ENCODE measurements at regions of chr15 and their contacts with region 1.

Region 1: GRCh38 chr15:48810414-48811317 is at the start of gene CEP152:
- DNase-seq: peak; percentile 99
- ATAC-seq: peak; percentile 95
- H3K4me3 ChIP-seq: peak within 1 kb of the TSS; percentile 86 to 97 (median 94)
- H3K4me3 Mint-ChIP-seq: peak within 1 kb of the TSS; percentile 95
- H3K27ac ChIP-seq: peak within 1 kb of the TSS; percentile 74 to 76
- H3K27ac Mint-ChIP-seq: peak within 1 kb of the TSS; percentile 86
- H3K4me1 ChIP-seq: peaks cover 15 to 18% of the 10 kb centered on the region in 2 donors
- H3K4me1 Mint-ChIP-seq: peaks cover 30% of the 10 kb centered on the region
- H3K27me3 ChIP-seq: peaks cover 0 to 7% (median 0%) of the 10 kb centered on the region in 4 experiments
- H3K27me3 Mint-ChIP-seq: peaks cover 4% of the 10 kb centered on the region
- CTCF ChIP-seq: no peak
- total RNA-seq, gene CEP152: 18.0 and 18.1 TPM in 2 replicates

Region 2: GRCh38 chr15:48330855-48331795 is 479.5 kb before region 1 on chr15 and contains the start of gene DUT:
- CTCF ChIA-PET with region 1: no interaction called
- POLR2A ChIA-PET with region 1: interaction called, 3 read pairs
- intact Hi-C with region 1: loop called (anchors 1 kb)
- DNase-seq: peak; percentile 89
- ATAC-seq: peak; percentile 78
- H3K4me3 ChIP-seq: peak within 1 kb of the TSS; percentile 76 to 90 (median 77)
- H3K4me3 Mint-ChIP-seq: peak within 1 kb of the TSS; percentile 94
- H3K27ac ChIP-seq: peak within 1 kb of the TSS; percentile 83 to 90
- H3K27ac Mint-ChIP-seq: peak within 1 kb of the TSS; percentile 95
- H3K4me1 ChIP-seq: peaks cover 15 to 17% of the 10 kb centered on the region in 2 donors
- H3K4me1 Mint-ChIP-seq: peaks cover 25% of the 10 kb centered on the region
- H3K27me3 ChIP-seq: no peaks in the 10 kb centered on the region
- H3K27me3 Mint-ChIP-seq: no peaks in the 10 kb centered on the region
- CTCF ChIP-seq: no peak
- total RNA-seq, gene DUT: 84.7 and 89.8 TPM in 2 replicates

Region 3: DNA sequence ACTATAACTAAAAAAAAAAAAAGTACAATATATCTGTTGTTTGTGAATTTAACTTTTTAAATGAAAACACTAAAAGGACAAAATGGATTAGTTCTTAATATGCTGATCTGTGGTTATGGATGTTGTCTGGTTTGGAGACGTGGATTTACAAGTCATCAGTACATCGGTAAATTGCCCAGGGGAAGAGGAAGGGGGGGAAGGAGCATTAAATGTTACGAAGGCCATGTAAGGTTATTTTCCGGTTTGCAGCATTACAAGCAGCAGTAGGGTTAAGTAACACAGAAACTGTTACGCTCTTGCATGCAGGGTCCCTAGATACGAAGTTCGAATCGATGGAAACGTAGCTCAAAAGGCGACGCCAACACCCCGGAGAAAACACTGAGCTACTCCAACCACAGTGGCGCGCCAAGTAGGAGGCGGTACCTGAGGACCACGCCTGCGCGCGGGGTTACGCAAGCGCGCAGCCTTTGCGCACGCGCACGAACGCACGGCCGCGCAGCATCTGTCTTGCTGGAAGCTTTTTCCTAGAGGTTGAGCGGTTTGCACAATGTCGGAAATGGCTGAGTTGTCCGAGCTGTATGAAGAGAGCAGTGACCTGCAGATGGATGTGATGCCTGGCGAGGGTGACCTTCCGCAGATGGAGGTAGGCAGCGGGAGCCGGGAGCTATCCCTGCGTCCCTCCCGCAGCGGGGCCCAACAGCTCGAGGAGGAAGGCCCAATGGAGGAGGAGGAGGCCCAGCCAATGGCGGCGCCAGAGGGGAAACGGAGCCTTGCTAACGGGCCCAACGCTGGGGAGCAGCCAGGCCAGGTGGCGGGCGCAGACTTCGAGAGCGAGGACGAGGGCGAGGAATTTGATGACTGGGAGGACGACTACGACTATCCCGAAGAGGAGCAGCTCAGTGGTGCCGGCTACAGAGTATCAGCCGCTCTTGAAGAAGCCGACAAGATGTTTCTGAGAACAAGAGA is 67.2 kb after region 1 on chr15 and contains the start of gene EID1:
- CTCF ChIA-PET with region 1: interaction called, 5 read pairs
- POLR2A ChIA-PET with region 1: interaction called, 8 read pairs
- intact Hi-C with region 1: loop called (anchors 1 kb)
- DNase-seq: peak; percentile 95
- ATAC-seq: peak; percentile 95
- H3K4me3 ChIP-seq: peak within 1 kb of the TSS; percentile 56 to 91 (median 82)
- H3K4me3 Mint-ChIP-seq: peak within 1 kb of the TSS; percentile 100
- H3K27ac ChIP-seq: peak within 1 kb of the TSS; percentile 79 to 83
- H3K27ac Mint-ChIP-seq: peak within 1 kb of the TSS; percentile 99
- H3K4me1 ChIP-seq: peaks cover 0 to 12% of the 10 kb centered on the region in 2 donors
- H3K4me1 Mint-ChIP-seq: peaks cover 25% of the 10 kb centered on the region
- H3K27me3 ChIP-seq: peaks cover 0 to 4% (median 1%) of the 10 kb centered on the region in 4 experiments
- H3K27me3 Mint-ChIP-seq: peaks cover 8% of the 10 kb centered on the region
- CTCF ChIP-seq: no peak
- total RNA-seq, gene EID1: 56.5 and 62.7 TPM in 2 replicates

Region 4: DNA sequence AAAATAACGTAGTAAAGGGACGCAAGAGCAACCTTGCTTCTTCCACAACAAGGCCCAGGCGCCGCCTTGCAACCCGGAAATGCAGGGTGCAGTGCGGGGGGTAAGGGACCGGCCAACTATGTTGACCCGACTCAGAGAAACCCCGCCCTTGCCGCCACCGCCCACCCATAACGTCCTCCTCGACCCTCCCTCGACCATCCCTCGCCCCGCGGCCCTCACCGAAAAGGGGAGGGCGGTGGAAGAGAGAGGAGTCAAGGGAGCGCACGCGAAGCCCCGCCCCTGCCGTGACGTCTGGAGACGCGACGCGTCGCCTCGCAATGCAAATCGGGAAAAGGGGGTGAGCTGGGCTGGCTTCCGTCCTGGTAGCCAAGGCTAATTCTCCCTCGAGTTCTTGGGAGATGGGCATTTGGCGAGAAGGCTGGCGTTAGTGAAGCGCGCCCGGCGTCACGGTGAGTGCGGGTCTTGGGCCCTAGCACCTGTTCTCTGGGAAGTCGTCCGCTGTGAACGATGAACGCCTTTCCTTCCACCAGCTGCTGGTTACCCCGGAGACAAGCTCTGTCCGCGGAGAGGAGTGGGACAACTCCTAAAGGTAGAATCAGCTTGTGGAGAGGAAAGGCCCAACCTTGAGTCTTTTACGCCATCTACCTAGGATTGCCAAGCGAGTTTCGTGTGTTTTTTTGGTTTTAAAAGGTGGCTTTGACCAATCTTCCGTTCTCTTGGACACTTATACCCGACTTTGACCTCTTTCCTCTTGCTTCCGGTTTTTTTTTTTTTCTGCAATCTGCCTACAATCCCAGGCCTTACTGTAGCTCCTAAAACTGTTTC is 1613.6 kb after region 1 on chr15 and contains the start of gene USP8:
- CTCF ChIA-PET with region 1: no interaction called
- POLR2A ChIA-PET with region 1: no interaction called
- intact Hi-C with region 1: loop called (anchors 1 kb)
- DNase-seq: peak; percentile 97
- ATAC-seq: peak; percentile 97
- H3K4me3 ChIP-seq: peak within 1 kb of the TSS; percentile 78 to 100 (median 83)
- H3K4me3 Mint-ChIP-seq: peak within 1 kb of the TSS; percentile 98
- H3K27ac ChIP-seq: peak within 1 kb of the TSS; percentile 95 to 98
- H3K27ac Mint-ChIP-seq: peak within 1 kb of the TSS; percentile 96
- H3K4me1 ChIP-seq: peaks cover 19 to 22% of the 10 kb centered on the region in 2 donors
- H3K4me1 Mint-ChIP-seq: peaks cover 37% of the 10 kb centered on the region
- H3K27me3 ChIP-seq: no peaks in the 10 kb centered on the region
- H3K27me3 Mint-ChIP-seq: no peaks in the 10 kb centered on the region
- CTCF ChIP-seq: no peak
- total RNA-seq, gene USP8: 126 TPM in 2 replicates

Measured in B cell (primary cell).